Activated T-helper 1 cell treated with anti-CD3 and anti-CD28 coated beads, Interleukin-12 subunit alpha, Interleukin-12 subunit beta, Interleukin-2, Interleukin-4 antibody, amounts not matched to agents 30 ng/mL and 10 ng/mL and 1 ng/mL, durations not matched to agents 14 hours and 24 hours and 36 hours (primary cell): ENCODE measurements at regions of chr3 and their contacts with region 1.

Region 1: DNA sequence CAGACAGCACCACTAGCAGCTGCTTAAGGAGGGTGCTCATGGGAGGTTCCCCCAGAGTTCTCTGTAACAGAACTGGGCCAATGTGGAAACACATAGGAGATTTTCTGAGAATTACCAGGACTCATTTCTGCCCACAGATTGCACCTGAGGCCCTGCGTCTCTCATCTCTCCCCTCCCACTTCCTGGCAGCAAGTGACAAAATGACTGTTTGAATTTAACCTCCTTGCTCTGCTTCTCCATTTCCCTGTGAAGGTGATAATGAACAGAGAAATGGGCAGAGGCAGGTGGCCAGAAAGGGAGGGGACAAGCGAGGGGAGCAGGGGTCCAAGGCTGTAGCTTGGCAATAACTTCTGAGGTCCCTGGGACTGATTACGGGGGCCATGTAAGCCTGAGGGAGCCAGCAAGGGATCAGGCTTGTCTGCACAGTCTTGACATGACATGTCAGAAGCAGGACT is 8.0 kb downstream of the EPHB1 start:
- DNase-seq: peak; percentile 55
- H3K4me3 Mint-ChIP-seq: peak overlapping the region; percentile 46
- H3K27ac Mint-ChIP-seq: peak overlapping the region; percentile 79
- H3K4me1 Mint-ChIP-seq: peaks cover 81% of the 10 kb centered on the region
- H3K27me3 Mint-ChIP-seq: peaks cover 28% of the 10 kb centered on the region

Region 2: GRCh38 chr3:134239538-134239937 is 563.5 kb before region 1 on chr3:
- intact Hi-C with region 1: loop called (anchors 10 kb)
- DNase-seq: no peak
- H3K4me3 Mint-ChIP-seq: peak overlapping the region; percentile 5
- H3K27ac Mint-ChIP-seq: peak overlapping the region; percentile 24
- H3K4me1 Mint-ChIP-seq: peaks cover 44% of the 10 kb centered on the region
- H3K27me3 Mint-ChIP-seq: peaks cover 24% of the 10 kb centered on the region

Region 3: DNA sequence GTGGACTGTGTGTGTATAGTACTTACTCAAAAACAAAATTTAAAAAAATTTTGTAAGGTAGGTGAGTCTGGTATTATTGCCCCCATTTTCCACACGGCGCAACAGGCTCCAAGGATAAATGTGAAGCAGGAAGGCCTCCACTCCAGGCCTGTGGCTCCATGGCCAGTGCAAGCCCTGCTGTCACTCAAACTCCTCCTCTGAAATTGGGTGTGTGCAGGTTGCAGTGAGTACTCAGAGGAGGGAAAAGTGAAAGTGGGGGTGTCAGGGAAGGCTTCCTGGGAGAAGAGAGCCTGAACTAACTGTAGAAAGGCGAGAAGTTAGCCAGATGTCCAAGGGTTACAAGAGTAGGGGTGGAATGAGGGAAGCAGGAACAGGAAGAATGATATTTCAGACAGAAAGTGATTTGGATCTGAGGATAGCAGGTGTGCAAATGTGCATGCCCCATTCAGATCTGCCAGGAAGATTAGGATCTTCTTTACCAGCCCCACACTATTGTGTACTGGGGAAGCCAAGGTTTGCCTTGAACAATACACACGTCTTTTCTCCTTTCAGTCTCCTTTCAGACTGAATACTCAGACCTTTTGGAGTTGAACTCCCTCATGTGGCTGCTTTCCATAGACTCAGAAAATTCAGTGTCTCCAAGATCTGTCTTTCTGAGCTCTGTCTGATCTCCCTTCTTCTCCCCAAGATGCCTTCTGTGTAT is 503.7 kb before region 1 on chr3:
- intact Hi-C with region 1: loop called (anchors 1 kb)
- DNase-seq: no peak
- H3K4me3 Mint-ChIP-seq: no peak overlapping the region
- H3K27ac Mint-ChIP-seq: no peak overlapping the region
- H3K4me1 Mint-ChIP-seq: no peaks in the 10 kb centered on the region
- H3K27me3 Mint-ChIP-seq: peaks cover 55% of the 10 kb centered on the region

Region 4: DNA sequence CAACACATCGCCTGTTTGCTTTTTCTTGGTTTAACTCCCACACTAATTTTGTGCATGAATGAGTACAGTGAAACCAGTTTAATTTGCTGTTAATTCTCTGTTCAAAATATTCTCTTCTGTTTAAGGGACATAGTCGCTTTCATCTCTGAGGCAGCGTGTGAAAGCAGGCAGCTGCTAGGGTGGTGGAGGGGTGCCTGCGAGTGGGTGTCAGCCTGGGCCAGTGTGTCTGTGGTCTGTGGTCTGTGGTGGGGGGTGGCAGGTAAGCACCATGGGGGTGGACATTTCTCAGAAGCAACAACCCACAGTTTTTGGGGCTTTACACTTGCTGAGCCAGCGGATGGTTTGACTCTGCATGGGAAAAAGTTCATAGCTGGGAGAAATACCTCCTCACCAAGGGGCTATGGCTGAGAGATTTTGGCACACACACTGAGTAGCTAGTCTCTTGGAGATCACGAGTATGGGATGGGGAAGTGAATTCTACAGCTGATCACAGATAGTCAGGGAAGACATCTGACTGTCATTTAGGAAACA is 101.2 kb after region 1 on chr3:
- intact Hi-C with region 1: loop called (anchors 2 kb)
- DNase-seq: peak; percentile 15
- H3K4me3 Mint-ChIP-seq: peak overlapping the region; percentile 16
- H3K27ac Mint-ChIP-seq: peak overlapping the region; percentile 77
- H3K4me1 Mint-ChIP-seq: peaks cover 14% of the 10 kb centered on the region
- H3K27me3 Mint-ChIP-seq: peaks cover 26% of the 10 kb centered on the region

Region 5: GRCh38 chr3:135136361-135137100 is 333.5 kb after region 1 on chr3:
- intact Hi-C with region 1: loop called (anchors 5 kb)
- DNase-seq: no peak
- H3K4me3 Mint-ChIP-seq: no peak overlapping the region
- H3K27ac Mint-ChIP-seq: peak overlapping the region; percentile 21
- H3K4me1 Mint-ChIP-seq: peaks cover 19% of the 10 kb centered on the region
- H3K27me3 Mint-ChIP-seq: no peaks in the 10 kb centered on the region